ENCODE measurements at regions of chr5 and their contacts with region 1.

Region 1: DNA sequence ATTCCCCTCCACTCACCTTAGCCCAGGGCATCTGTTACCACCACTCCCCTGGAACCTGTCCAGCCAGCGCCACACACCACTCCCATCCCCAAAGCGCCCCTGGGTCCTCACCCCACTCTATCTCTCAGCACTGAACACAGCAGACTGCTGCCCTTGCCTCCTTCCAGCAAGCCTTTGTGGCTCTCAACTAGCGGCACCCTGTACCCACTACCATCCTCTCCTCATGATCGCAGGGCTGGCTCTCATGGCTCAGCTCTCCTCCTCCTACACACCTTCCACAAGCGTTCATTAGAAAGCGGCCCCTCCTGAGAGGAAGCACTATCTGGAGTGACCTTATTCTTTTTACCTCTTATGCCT is 13.3 kb upstream of the BASP1 start:
- DNase-seq: no peak
- ATAC-seq: no peak
- H3K4me3 ChIP-seq: no peak overlapping the region
- H3K27ac ChIP-seq: no peak overlapping the region
- H3K4me1 ChIP-seq: no peaks in the 10 kb centered on the region
- H3K27me3 ChIP-seq: peaks cover 3% of the 10 kb centered on the region

Region 2: GRCh38 chr5:16784843-16785791 is 419.0 kb before region 1 on chr5:
- intact Hi-C with region 1: loop called in 1 of 4 experiments (anchors 5 kb)
- DNase-seq: no peak
- ATAC-seq: no peak
- H3K4me3 ChIP-seq: no peak overlapping the region
- H3K27ac ChIP-seq: no peak overlapping the region
- H3K4me1 ChIP-seq: no peaks in the 10 kb centered on the region
- H3K27me3 ChIP-seq: no peaks in the 10 kb centered on the region

Region 3: DNA sequence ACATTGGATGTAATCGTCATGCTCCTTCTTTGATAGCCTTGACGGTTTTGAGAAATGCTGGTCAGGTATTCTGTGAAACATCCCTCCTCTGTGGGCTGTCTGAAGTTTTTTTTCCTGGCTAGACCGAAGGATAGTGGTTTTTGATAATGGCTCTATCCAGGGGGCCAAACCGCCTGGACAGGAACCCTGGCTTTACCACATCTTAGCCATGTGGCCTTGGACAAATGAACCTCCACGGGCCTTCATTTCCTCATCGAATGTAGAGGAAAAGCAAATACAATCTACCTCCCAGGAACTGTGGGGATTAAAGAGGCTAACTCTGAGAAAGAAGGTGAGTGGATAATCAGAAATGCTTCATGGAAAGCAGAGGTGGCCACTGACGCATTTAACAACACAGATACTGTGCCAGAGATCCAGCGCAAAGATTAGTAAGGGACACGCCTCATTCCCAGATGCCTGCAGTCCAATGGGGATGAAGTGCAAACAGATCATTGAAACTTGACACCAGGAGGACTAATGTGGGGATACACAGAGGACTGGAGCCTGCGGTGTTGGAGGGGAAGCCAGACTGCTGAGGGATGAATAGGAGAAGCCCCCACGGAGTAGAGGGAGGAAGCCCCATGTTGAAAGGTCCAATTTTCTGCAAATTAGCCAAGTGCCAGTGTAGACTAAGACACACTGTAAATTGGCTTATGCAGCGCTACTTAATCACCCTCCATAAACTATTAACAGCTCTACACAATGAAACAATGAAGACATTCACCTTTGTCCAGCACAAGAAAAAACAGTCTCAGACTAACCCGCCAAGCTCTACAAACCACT is 309.7 kb before region 1 on chr5:
- intact Hi-C with region 1: no loop called
- DNase-seq: no peak
- ATAC-seq: no peak
- H3K4me3 ChIP-seq: no peak overlapping the region
- H3K27ac ChIP-seq: peak overlapping the region; percentile 19
- H3K4me1 ChIP-seq: no peaks in the 10 kb centered on the region
- H3K27me3 ChIP-seq: no peaks in the 10 kb centered on the region

Region 4: DNA sequence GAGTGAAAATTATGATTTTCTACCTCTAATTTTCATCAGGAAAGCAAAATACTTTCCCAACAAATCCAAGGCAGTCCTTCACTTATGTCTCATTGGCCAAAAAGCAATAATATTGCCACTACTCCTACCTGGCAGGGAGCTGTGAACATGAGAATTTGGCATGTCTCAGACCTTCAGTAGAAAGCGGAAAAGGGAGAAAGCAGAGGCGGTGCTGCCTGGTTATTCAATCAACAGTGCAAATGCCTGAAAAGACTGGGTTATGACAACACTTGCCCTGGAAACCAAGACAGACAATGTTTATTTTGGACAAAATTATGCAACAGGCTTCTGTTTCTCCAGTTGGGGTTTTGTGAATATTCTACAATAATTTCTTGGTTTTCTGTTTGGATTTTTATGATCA is 624.6 kb after region 1 on chr5:
- intact Hi-C with region 1: no loop called
- DNase-seq: no peak
- ATAC-seq: no peak
- H3K4me3 ChIP-seq: no peak overlapping the region
- H3K27ac ChIP-seq: no peak overlapping the region
- H3K4me1 ChIP-seq: no peaks in the 10 kb centered on the region
- H3K27me3 ChIP-seq: no peaks in the 10 kb centered on the region